Transverse colon (tissue), 4 donors: ENCODE measurements at regions of chr9 and their contacts with region 1.

Region 1: DNA sequence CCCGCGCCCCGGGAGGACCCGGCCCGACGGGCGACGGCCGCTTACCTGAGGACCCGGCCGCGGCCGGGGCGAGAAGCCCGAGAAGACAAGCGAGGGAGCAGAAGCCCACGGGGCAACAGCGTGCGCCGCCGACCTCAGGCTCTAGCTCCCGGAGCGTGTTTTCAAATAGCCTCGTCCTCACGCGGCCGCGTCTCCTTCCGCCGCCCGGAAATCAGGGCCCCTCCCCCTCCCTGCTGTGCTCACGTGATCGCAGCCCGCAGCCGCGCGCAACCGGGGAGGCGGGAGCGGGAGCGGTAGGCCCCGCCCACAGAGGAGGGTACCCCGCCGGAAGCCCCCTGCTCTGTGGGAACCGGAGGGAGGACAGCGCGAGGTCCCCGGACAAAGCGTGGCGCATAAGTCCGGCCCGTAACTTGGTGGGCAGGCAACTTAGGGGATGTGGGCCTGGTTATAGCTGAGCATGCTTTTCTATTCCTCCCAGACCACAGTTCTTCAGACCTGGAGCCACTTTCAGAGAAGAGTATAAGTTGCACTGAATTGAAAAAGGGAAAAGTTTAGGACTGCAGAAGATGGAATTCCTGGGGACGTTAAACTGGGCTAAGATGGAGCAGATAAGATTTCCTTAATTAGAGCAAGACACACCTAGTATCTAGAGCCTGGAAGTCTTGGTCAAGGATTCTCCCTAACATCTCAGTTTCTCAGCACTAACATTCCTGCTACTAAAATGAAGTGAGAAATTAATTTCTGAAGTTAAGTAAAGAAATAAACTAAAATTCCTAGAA is at the start of gene TEX10:
- DNase-seq: peak; percentile 91
- H3K4me3 ChIP-seq: peak within 1 kb of the TSS; percentile 49 to 99 (median 90)
- H3K27ac ChIP-seq: peak within 1 kb of the TSS; percentile 79 to 89 (median 88)
- H3K4me1 ChIP-seq: peaks cover 5 to 27% (median 10%) of the 10 kb centered on the region in 4 donors
- H3K27me3 ChIP-seq: no peaks in the 10 kb centered on the region
- CTCF ChIP-seq: no peak
- EP300 ChIP-seq: no peak
- POLR2A ChIP-seq: peak; percentile 56
- total RNA-seq, gene TEX10: 8.7 to 16.8 (median 13.0) TPM

Region 2: GRCh38 chr9:99748266-99748665 is 604.6 kb before region 1 on chr9:
- in situ Hi-C with region 1: no loop called
- intact Hi-C with region 1: no loop called
- DNase-seq: no peak
- H3K4me3 ChIP-seq: no peak overlapping the region
- H3K27ac ChIP-seq: no peak overlapping the region
- H3K4me1 ChIP-seq: no peaks in the 10 kb centered on the region
- H3K27me3 ChIP-seq: no peaks in the 10 kb centered on the region
- CTCF ChIP-seq: no peak
- EP300 ChIP-seq: no peak
- POLR2A ChIP-seq: no peak

Region 3: DNA sequence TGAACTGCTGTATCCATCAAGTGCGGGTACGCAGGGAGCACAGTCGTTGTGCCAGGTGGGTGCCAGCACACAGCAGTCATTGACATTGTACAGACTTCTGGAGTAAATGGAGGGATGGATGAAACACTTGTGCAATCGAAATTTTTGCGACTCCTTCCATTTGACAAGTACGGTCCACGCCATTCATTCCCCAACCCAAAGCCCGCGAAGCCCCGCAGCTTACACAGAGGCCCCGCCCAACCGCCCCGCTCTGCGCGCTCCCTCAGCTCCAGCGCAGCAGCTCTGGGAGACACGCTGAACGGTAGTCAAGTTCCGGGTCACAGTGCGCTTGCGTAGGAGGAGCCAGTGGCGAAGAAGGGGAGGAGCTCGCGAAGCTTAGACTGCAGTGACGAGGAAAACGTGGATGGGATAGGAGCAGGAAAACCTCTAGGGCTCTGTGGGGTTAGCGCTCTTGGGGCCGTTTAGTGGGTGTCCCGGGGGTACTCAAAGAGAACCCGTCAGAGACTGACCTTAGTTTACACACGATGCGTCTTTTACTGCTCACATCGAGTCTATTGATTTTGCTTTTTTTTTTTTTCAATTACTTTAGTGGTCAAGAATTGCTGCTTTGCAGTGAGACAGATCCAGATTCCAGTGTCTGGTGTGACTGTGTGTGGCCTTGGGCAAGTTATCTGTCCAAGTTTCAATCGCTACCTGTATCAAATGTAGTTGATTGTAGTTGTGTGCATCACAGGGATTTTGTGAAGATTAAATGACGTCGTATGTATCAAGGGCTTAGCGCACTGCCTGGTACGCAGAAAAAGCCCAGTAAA is 58.8 kb after region 1 on chr9:
- in situ Hi-C with region 1: loop called in 1 of 4 experiments (anchors 10 kb)
- intact Hi-C with region 1: no loop called
- DNase-seq: peak; percentile 92
- H3K4me3 ChIP-seq: peak overlapping the region in 3 of 4 donors; percentile 36 to 57 (median 36)
- H3K27ac ChIP-seq: peak overlapping the region; percentile 7 to 52 (median 29)
- H3K4me1 ChIP-seq: peaks cover 0 to 8% (median 0%) of the 10 kb centered on the region in 4 donors
- H3K27me3 ChIP-seq: peaks cover under 1% of the 10 kb centered on the region
- CTCF ChIP-seq: no peak
- EP300 ChIP-seq: no peak
- POLR2A ChIP-seq: no peak

Region 4: GRCh38 chr9:100437860-100438805 is 85.2 kb after region 1 on chr9:
- in situ Hi-C with region 1: no loop called
- intact Hi-C with region 1: loop called (anchors 10 kb)
- DNase-seq: peak; percentile 76
- H3K4me3 ChIP-seq: no peak overlapping the region
- H3K27ac ChIP-seq: no peak overlapping the region
- H3K4me1 ChIP-seq: no peaks in the 10 kb centered on the region
- H3K27me3 ChIP-seq: no peaks in the 10 kb centered on the region
- CTCF ChIP-seq: peak; percentile 82 to 99 (median 96)
- EP300 ChIP-seq: no peak
- POLR2A ChIP-seq: no peak